HepG2 (cell line): ENCODE measurements at regions of chr15 and their contacts with region 1.

Region 1: DNA sequence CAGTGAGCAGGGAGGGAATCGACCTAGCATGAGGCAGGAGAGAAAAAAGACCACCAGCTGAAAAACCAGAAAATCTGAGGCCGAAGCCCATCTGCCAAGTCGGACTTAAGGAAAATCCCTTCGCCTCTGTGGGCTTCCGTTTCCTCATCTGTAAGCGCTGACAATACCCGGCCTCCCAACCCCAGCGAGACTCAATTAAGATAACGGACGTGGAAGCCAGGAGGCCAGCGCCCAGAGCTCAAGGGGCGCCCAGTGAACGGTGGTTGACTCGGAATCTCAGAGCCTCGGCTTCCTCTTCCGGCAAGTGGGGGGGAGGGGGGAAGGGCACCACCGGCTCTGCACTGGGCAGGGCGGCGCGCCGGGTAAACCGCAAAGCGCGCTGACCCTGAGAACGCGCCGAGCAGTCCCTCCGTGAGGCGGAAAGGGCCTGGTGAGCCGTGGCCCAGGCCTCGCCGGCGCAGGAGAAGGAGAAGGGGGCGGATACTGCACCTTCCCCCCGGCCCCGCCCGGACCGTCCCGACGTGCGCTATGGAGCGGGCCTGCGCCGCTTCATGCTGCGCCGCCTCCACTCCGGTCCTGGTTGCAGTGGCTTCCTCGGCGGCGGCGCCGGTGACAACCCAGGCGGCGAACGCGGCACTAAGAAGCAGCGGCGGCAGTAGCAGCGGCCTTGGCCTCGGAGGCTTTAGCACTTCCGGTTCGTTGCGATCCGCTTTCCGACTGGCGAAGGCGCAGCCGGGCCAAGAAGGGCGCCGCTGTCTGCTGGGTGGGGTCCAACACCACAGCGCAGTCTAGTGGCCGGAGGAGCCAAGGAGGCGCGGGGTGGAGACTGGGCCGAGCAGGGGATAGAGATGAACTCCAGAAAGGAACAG is at the start of gene DPP8:
- DNase-seq: peak; percentile 88
- ATAC-seq: peak; percentile 96
- H3K4me3 ChIP-seq: peak within 1 kb of the TSS; percentile 87 to 100 (median 97)
- H3K27ac ChIP-seq: peak within 1 kb of the TSS; percentile 99
- H3K4me1 ChIP-seq: peaks cover 45% of the 10 kb centered on the region
- H3K27me3 ChIP-seq: no peaks in the 10 kb centered on the region; a peak in 1 of 5 replicates
- CTCF ChIP-seq: peak; percentile 98
- EP300 ChIP-seq: no peak
- POLR2A ChIP-seq: peak; percentile 63 to 92
- RAD21 ChIP-seq: peak; percentile 60; the same call in 1 of the 2 replicates
- total RNA-seq, gene DPP8: 26.3 and 34.8 TPM in 2 replicates

Region 2: DNA sequence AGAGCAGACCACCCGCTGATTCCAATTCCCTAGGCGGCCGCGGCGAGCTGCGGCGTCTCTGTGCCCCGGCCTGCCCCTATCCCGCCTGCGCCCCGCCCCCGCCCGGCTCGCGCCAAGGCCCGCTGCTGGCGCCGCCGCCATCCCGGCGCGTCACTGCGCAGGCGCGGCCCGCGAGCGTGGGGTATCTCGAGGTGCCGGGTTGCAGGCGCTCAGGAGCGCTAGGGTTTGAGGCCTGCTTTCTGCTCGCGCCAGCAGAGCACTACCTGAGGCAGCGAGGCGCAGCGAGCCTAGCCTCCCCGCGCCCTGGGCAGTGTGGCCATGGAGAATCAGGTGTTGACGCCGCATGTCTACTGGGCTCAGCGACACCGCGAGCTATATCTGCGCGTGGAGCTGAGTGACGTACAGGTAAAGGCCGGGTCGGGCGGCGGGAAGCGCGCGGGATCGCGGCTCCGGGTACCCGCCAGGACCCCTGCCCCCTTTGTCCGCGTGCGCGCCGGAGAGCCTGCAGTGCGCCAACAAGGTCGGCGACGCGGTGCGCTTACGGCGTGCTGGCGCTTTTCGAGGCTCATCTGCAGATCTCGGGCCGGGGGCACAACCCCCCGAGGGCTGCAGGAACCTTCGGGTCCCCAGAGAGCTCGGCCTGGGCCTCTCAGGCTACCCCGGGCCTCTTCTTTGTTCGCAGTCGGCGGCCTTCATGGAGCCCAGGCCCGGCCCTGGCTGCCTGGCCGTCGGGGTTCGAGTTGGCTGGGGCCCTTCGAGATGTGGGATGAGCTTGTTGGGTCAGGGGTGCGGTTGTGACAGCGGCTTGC is 13.3 kb after region 1 on chr15 and contains the start of gene HACD3:
- CTCF ChIA-PET with region 1: interaction called, 11 read pairs
- POLR2A ChIA-PET with region 1: interaction called, 21 read pairs
- in situ Hi-C with region 1: no loop called
- intact Hi-C with region 1: loop called (anchors 2 kb)
- DNase-seq: peak; percentile 73
- ATAC-seq: peak; percentile 88
- H3K4me3 ChIP-seq: peak within 1 kb of the TSS; percentile 79 to 84 (median 84)
- H3K27ac ChIP-seq: peak within 1 kb of the TSS; percentile 90
- H3K4me1 ChIP-seq: peaks cover 58% of the 10 kb centered on the region
- H3K27me3 ChIP-seq: no peaks in the 10 kb centered on the region
- CTCF ChIP-seq: peak; percentile 3; the same call in 1 of the 2 replicates
- EP300 ChIP-seq: no peak
- POLR2A ChIP-seq: peak; percentile 73 to 77
- RAD21 ChIP-seq: peak; percentile 18; the same call in 1 of the 2 replicates
- total RNA-seq, gene HACD3: 108 and 161 TPM in 2 replicates

Region 3: GRCh38 chr15:65553691-65554090 is 36.5 kb after region 1 on chr15:
- CTCF ChIA-PET with region 1: no interaction called
- POLR2A ChIA-PET with region 1: no interaction called
- in situ Hi-C with region 1: no loop called
- intact Hi-C with region 1: loop called (anchors 2 kb)
- DNase-seq: no peak
- ATAC-seq: no peak
- H3K4me3 ChIP-seq: no peak overlapping the region
- H3K27ac ChIP-seq: no peak overlapping the region
- H3K4me1 ChIP-seq: peaks cover 22% of the 10 kb centered on the region
- H3K27me3 ChIP-seq: no peaks in the 10 kb centered on the region
- CTCF ChIP-seq: no peak
- EP300 ChIP-seq: no peak
- POLR2A ChIP-seq: no peak
- RAD21 ChIP-seq: no peak